ENCODE measurements at regions of chr5 and their contacts with region 1.

Region 1: DNA sequence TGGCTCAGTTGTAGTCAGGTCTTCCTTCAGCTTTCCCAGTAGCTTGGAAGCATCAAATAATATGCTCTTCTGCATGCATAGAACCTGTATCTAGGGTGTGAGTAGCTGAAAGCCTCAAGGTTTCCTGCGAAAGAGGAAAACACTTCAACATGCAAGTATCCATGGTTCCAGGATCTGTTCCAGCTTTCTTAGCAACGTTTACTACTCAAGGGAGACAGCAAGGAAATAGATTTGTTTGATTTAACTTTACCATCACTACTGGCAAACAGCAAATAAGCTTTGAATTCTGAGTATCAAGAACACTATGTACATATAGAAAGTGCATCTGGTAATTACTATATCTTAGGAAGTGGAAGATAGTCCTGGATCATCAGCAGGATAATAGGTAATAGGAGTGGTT is 341.0 kb downstream of the PRR16 start:
- DNase-seq: no peak
- ATAC-seq: no peak

Region 2: GRCh38 chr5:119943148-119943547 is 862.0 kb before region 1 on chr5:
- intact Hi-C with region 1: loop called (anchors 2 kb)
- DNase-seq: no peak
- ATAC-seq: peak; percentile 51

Measured in left ventricle myocardium superior (tissue), 1 donor.